ENCODE measurements at regions of chr1 and their contacts with region 1.

Region 1: DNA sequence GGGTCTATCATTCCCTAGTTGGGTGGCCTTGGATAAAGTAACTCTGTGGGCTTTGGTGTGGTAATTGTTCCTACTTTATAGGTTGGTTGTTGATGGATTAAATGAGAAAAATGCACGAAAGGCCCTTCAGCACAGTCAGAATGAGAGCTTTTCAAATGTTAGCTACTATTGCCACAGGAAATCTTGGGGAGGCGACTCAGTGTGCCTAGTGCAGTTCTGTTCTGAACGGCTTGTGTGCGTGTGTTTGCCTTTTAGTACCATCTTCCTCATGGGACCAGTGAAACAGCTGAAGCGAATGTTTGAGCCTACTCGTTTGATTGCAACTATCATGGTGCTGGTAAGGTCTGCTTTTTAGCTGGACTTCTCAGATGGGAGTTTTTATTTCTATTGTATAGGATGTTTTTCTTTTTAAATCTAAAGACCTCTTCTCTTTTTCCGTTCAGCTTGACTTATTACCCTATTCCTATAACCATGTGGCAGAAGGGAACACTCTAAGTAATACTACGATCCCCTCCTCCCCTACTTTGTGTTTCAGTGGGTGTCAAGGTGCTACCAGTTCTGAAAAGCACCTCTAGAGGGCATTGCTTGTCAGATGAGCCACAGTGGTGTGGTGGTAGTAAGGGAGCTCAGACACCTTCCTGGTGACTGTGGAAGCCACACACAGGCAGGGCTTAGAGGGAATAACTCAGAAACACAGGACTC is 9.2 kb downstream of the SFT2D2 start:
- DNase-seq: peak; percentile 65
- ATAC-seq: peak; percentile 93
- H3K4me3 Mint-ChIP-seq: no peak overlapping the region
- H3K27ac Mint-ChIP-seq: no peak overlapping the region
- H3K4me1 Mint-ChIP-seq: peaks cover 44% of the 10 kb centered on the region
- H3K27me3 Mint-ChIP-seq: no peaks in the 10 kb centered on the region

Region 2: DNA sequence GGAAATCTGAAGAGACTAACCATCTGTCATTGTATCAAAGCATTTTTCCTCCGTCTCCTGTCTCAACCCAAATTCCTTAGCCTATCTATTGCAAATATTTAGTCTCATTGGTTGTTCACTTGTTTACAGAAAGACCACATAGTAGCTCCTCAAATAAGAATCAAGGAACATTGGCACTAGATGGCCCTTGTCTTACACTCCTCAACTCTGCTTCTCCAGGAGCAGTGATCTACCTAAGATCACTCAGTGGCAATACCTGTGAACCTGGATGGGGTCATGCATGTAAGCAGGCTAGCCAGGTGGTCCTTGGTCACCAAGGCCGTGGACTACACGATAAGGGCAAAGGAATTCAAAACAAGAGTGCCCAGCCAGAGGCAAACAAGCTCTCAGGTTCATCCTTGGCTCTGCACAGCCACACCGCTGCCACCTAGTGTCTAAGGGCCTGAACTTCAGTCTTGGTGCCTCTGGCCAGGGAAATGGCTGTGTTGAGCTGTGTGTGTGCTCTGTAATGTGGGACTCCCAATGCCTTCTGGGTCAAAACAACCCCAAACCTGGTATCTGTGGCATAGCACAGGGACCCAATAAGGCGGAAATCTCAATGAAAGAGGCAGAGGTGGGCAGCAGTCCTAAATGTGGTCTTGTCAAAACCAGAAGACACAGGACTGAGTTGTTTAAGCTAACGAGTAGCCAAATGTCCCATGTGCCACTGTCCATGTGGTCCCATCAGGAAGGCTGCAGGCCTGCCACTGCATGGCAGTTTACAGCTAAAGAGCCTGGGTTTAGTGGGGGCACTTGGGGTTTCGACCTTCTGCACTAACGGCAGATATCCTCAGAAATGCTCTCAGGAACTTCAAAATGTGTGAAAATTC is 152.8 kb before region 1 on chr1:
- CTCF ChIA-PET with region 1: interaction called, 10 read pairs
- POLR2A ChIA-PET with region 1: no interaction called
- DNase-seq: peak; percentile 80
- ATAC-seq: peak; percentile 86
- H3K4me3 Mint-ChIP-seq: no peak overlapping the region
- H3K27ac Mint-ChIP-seq: no peak overlapping the region
- H3K4me1 Mint-ChIP-seq: peaks cover 4% of the 10 kb centered on the region
- H3K27me3 Mint-ChIP-seq: no peaks in the 10 kb centered on the region

Region 3: GRCh38 chr1:168148916-168149315 is 86.1 kb before region 1 on chr1:
- CTCF ChIA-PET with region 1: no interaction called
- POLR2A ChIA-PET with region 1: no interaction called
- DNase-seq: no peak
- ATAC-seq: no peak
- H3K4me3 Mint-ChIP-seq: peak overlapping the region; percentile 22
- H3K27ac Mint-ChIP-seq: peak overlapping the region; percentile 10
- H3K4me1 Mint-ChIP-seq: peaks cover 18% of the 10 kb centered on the region
- H3K27me3 Mint-ChIP-seq: peaks cover 7% of the 10 kb centered on the region

Region 4: DNA sequence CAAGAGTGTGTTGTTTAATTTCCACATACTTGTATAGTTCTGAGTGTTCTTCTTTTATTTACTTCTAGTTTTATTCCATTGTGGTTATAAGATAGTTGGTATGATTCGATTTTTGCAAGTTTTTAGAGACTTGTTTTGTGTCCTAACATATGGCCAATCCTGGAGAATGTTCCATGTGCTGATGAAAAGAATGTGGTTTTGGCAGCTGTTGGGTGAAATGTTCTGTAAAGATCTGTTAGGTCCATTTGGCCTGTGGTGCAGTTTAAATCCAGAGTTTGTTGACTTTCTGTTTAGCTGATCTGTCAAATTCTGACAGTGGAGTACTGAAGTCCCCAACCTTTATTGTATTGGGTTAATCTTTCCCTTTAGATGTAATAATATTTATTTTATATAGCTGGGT is 75.7 kb before region 1 on chr1:
- CTCF ChIA-PET with region 1: no interaction called
- POLR2A ChIA-PET with region 1: no interaction called
- DNase-seq: no peak
- ATAC-seq: no peak
- H3K4me3 Mint-ChIP-seq: no peak overlapping the region
- H3K27ac Mint-ChIP-seq: no peak overlapping the region
- H3K4me1 Mint-ChIP-seq: no peaks in the 10 kb centered on the region
- H3K27me3 Mint-ChIP-seq: peaks cover 28% of the 10 kb centered on the region

Region 5: DNA sequence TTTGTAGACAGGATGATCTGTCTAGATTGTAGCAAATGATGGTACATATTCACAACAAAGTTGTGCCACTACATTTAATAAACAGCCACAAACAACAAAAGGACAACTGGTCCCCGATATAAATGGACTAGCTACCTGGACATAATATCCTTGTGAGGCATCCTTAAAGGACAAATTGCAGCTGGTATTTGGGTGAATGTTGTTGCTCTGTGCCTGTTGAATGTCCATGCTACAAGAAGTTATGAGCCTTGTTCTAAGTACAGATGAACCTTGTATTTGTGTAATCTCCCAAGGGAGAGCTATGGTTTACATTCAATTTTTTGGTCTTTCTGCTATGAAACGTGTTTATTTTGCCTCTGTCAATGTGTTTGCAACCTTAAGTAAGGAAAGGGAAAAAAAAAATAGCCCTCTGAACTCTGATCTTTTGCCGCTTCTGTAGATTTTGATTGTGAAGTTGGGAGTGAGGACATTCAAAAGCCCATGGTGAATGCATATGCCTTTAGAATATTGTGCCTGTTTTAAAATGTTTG is 17.3 kb after region 1 on chr1:
- CTCF ChIA-PET with region 1: interaction called, 18 read pairs
- POLR2A ChIA-PET with region 1: no interaction called
- DNase-seq: no peak
- ATAC-seq: no peak
- H3K4me3 Mint-ChIP-seq: no peak overlapping the region
- H3K27ac Mint-ChIP-seq: no peak overlapping the region
- H3K4me1 Mint-ChIP-seq: peaks cover 3% of the 10 kb centered on the region
- H3K27me3 Mint-ChIP-seq: no peaks in the 10 kb centered on the region

Region 6: DNA sequence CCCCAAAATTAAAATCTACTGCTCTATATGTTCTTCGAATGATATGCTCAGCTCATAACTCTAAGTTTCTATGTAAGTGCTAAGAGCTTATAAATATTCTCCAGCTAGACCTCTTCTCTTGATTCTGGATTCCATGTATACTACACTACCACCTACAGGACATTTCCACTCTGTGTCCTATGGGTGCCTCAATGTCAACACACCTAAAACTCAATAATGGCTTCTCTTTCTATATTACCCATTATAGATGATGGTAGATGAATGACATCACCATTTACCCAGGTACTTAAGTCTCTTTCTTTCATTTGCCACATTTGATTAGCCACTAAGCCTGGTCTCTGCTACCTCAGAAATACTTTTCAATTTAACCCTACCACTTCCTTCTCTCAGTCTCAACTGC is 86.9 kb after region 1 on chr1:
- CTCF ChIA-PET with region 1: interaction called, 43 read pairs
- POLR2A ChIA-PET with region 1: no interaction called
- DNase-seq: no peak
- ATAC-seq: peak; percentile 85
- H3K4me3 Mint-ChIP-seq: no peak overlapping the region
- H3K27ac Mint-ChIP-seq: no peak overlapping the region
- H3K4me1 Mint-ChIP-seq: peaks cover 24% of the 10 kb centered on the region
- H3K27me3 Mint-ChIP-seq: no peaks in the 10 kb centered on the region

Region 7: GRCh38 chr1:168335500-168335899 is 100.5 kb after region 1 on chr1:
- CTCF ChIA-PET with region 1: interaction called, 82 read pairs
- POLR2A ChIA-PET with region 1: no interaction called
- DNase-seq: no peak
- ATAC-seq: peak; percentile 57
- H3K4me3 Mint-ChIP-seq: no peak overlapping the region
- H3K27ac Mint-ChIP-seq: no peak overlapping the region
- H3K4me1 Mint-ChIP-seq: peaks cover 27% of the 10 kb centered on the region
- H3K27me3 Mint-ChIP-seq: no peaks in the 10 kb centered on the region

Region 8: DNA sequence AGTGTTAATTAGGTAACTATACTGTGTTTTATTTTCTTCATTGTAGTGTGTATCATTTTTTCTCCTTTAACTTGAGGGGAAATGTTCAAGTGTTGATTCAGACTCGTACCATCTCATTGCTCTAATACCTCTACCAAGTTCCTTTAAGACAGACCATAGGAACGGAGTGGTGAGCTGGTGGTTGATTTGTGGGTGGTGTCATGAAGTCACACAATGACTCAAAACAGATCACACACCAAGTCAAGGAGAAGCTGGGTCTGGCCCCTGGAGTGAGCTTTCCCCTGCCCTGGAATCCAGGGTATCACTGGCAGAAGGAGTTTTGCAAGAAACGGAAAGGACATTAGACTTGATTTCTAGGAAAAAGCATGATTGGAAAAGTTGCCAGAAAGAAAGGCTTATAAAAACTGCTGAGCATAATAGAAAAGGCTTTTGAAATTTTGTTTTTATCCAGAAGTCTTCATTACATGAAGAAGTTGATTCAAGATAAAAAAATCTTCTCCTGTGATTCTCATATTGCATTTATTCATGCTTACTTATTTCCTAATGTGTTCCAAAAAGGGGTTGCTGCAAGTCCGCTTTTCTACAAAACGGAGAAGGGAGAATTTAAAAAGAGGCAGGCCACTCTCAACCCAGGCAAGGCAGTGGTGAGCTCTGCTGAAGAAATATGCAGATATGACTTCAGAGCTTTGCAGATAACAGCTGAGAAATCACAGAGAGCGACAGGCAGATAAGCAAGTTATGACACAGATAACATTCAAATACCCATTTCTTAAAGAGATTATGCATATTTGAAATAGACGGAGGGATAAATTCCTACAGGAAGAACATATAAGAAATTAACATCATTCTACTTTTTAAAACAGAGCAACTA is 125.4 kb after region 1 on chr1:
- CTCF ChIA-PET with region 1: interaction called, 15 read pairs
- POLR2A ChIA-PET with region 1: no interaction called
- DNase-seq: peak; percentile 66
- ATAC-seq: peak; percentile 48
- H3K4me3 Mint-ChIP-seq: no peak overlapping the region
- H3K27ac Mint-ChIP-seq: no peak overlapping the region
- H3K4me1 Mint-ChIP-seq: peaks cover 40% of the 10 kb centered on the region
- H3K27me3 Mint-ChIP-seq: peaks cover 2% of the 10 kb centered on the region

Region 9: DNA sequence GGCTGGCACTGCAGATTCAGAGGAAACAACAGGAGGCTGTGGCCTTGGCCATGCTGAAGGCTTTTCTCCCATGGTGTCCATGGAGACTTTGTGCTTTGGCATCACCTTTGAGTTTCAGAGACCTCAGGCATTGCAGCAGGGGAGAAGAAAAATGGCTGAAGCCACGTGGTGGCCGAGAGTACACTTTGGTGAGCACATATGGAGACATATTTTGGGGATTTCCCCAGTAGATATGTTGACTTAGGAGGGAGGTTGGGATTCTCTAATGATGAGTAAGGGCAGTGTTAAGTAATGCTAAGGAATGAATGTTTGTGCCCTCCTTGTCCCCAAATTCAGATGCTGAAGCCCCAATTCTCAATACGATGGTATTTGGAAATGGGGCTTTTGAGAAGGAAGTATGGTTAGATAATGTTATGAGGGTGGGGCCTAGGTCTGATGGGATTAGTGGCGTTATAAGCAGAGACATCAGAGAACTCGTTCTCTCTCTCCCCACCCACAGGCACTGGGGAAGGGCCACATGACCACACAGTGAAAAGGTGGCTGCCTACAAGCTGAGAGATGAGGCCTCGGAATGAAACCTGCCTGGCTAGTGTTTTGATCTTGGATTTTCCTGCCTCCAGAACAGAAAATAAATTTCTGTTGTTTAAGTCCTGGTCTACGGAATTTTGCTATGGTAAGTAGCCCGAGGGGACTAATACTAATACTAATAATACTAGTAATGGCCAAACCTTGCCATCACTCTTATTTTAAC is 144.3 kb after region 1 on chr1:
- CTCF ChIA-PET with region 1: interaction called, 11 read pairs
- POLR2A ChIA-PET with region 1: no interaction called
- DNase-seq: no peak
- ATAC-seq: no peak
- H3K4me3 Mint-ChIP-seq: no peak overlapping the region
- H3K27ac Mint-ChIP-seq: no peak overlapping the region
- H3K4me1 Mint-ChIP-seq: no peaks in the 10 kb centered on the region
- H3K27me3 Mint-ChIP-seq: peaks cover 4% of the 10 kb centered on the region